BJ (cell line): ENCODE measurements at regions of chr1 and their contacts with region 1.

Region 1: GRCh38 chr1:154558575-154559465 is at the start of gene UBE2Q1:
- DNase-seq: peak; percentile 88
- H3K4me3 ChIP-seq: peak within 1 kb of the TSS; percentile 85
- H3K27me3 ChIP-seq: no peaks in the 10 kb centered on the region
- CTCF ChIP-seq: no peak
- polyA plus RNA-seq, gene UBE2Q1: 11.0 and 16.1 TPM in 2 replicates

Region 2: GRCh38 chr1:154574716-154575115 is 15.9 kb after region 1 on chr1:
- CTCF ChIA-PET with region 1: interaction called, 12 read pairs
- POLR2A ChIA-PET with region 1: no interaction called
- DNase-seq: no peak
- H3K4me3 ChIP-seq: no peak overlapping the region
- H3K27me3 ChIP-seq: peaks cover 2% of the 10 kb centered on the region; the same call in 1 of the 2 replicates
- CTCF ChIP-seq: no peak

Region 3: GRCh38 chr1:154627257-154628120 is 68.7 kb after region 1 on chr1:
- CTCF ChIA-PET with region 1: interaction called, 10 read pairs
- POLR2A ChIA-PET with region 1: interaction called, 3 read pairs
- DNase-seq: no peak
- H3K4me3 ChIP-seq: peak overlapping the region; percentile 96
- H3K27me3 ChIP-seq: peaks cover 2% of the 10 kb centered on the region; the same call in 1 of the 2 replicates
- CTCF ChIP-seq: no peak